Panc1 (cell line): ENCODE measurements at regions of chrX and their contacts with region 1.

Region 1: DNA sequence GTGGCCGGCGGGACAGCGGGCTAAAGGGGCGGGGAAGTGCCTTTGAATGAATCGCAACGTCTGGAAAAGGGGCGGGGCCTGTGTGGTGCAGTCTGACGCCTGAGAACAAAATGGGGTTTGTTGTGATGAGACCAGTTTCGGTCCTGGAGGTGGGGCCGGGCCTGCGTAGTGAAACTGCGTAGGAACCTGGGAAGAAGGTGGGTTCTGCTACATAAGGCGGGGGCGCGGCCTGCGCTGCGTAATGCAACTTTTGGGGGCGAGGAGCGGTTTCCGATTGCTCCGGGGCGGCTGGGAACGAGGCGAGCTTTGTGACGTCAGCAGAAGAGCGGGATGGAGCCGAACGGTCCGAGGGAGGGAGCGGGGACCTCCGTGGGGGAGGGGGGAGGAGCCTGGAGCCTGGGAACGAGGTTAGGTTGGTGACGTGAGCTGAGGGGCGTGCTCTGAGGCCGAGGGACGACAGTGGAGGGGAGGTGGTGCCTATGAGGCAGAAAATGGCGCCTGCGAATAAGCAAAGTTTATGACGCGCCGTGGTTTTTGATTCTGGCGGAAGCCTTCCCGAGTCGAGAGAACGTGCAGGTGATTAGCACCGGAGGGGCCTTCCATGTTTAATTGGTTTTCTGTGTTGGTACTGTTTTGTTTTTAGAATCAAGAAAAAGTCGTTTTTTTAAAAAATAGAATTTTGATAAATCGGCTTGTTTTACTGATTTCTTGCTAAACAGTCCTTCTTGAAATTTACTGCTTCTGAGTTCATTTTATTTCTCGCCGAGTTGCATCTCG is 716 bp downstream of the USP11 start:
- DNase-seq: peak; percentile 84
- ATAC-seq: peak; percentile 96
- H3K4me3 ChIP-seq: peak overlapping the region; percentile 64 to 70
- H3K27ac ChIP-seq: peak overlapping the region; percentile 96
- H3K4me1 ChIP-seq: peaks cover 10% of the 10 kb centered on the region; the same call in 1 of the 2 replicates
- H3K27me3 ChIP-seq: no peaks in the 10 kb centered on the region
- CTCF ChIP-seq: no peak

Region 2: DNA sequence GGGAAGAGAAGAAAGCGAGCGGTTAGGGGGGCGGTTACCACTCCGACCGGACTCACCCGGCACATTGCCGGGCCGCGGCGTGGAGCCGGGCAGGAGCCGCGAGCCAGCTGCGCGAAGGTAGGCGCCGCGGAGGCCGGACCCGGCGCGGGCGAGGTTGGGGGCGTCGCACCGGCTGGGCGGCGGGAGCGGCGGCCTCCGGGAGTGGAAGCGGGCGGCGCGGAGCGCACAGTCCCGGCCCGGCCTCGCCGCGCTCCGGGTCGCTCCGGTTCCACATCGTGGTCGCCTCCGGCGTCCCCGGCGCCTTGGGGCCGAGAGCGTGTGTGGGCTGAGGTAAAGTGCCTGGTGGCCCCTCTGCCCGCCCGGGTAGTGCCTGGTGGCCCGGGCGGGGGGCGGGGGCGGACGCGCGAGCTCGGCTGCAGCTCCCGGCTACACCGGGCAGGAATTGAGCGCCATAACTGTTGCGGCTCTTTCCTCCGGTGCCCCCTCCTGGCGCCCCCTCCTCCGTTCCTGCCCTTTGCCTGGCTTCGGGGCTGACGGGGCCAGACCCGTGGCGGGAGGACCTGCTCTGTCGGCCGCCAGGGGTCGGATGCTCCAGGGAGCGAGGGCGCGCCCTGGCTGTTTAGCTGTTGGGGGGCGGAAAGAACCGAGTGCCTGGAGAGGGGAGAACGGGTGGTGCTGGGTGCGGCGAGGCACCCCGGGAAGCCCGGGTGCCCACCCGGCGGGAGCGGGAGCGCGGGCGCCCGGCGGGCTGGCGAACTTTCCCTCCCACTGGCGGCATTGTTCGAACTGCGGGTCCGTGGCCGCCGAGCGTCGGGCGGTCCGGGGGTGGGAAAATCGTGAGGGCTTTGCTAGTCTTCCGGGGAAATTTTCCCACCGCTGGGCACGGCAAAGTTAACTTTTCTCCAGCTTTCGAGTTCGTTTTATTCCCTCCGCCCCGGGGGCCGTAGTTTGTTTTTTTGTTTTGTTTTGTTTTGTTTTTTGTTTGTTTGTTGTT is 320.6 kb before region 1 on chrX:
- CTCF ChIA-PET with region 1: interaction called, 13 read pairs
- POLR2A ChIA-PET with region 1: no interaction called
- in situ Hi-C with region 1: no loop called
- intact Hi-C with region 1: no loop called
- DNase-seq: no peak
- ATAC-seq: peak; percentile 83
- H3K4me3 ChIP-seq: peak overlapping the region; percentile 68 to 73
- H3K27ac ChIP-seq: peak overlapping the region; percentile 83
- H3K4me1 ChIP-seq: peaks cover 13% of the 10 kb centered on the region
- H3K27me3 ChIP-seq: no peaks in the 10 kb centered on the region
- CTCF ChIP-seq: peak; percentile 82

Region 3: GRCh38 chrX:47264483-47265173 is 31.1 kb after region 1 on chrX:
- CTCF ChIA-PET with region 1: interaction called, 9 read pairs
- POLR2A ChIA-PET with region 1: interaction called, 10 read pairs
- in situ Hi-C with region 1: no loop called
- intact Hi-C with region 1: no loop called
- DNase-seq: no peak
- ATAC-seq: no peak
- H3K4me3 ChIP-seq: no peak overlapping the region
- H3K27ac ChIP-seq: no peak overlapping the region
- H3K4me1 ChIP-seq: no peaks in the 10 kb centered on the region
- H3K27me3 ChIP-seq: no peaks in the 10 kb centered on the region
- CTCF ChIP-seq: no peak